ENCODE measurements at regions of chr7 and their contacts with region 1.

Region 1: DNA sequence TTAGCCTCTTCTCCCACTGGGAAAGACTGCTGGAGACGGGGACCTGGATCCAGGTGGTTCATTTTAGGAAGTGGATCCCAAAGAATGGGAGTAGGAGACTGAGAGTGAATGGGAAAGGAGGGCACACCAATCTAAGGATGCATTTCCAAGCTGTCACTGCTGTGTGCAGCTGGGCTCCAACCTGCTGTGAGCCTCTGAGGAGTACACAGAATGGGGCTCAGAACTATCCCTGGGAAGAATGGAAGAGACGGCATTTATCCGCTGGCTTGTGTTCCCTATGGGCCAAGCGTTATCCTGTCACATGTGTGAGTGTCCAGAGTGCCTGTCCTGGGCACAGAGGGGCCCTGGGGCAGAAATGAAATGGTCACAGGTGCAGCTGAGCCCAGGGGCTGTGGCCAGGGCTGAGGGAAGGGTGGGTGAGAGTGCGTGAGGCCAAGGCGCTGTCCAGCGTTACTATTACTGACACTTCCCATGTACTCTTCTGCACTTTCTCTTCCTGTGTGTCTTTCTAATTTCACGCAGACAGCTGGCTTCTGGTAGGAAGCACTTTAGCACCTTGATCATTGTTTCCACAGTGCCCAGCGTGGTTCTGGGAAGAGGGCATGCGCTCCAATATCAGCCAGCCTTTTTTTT is 35.4 kb upstream of the PODXL start:
- DNase-seq: no peak
- ATAC-seq: no peak
- H3K4me3 Mint-ChIP-seq: no peak overlapping the region
- H3K27ac Mint-ChIP-seq: no peak overlapping the region
- H3K4me1 Mint-ChIP-seq: no peaks in the 10 kb centered on the region
- H3K27me3 Mint-ChIP-seq: peaks cover 3% of the 10 kb centered on the region
- CTCF ChIP-seq: no peak

Region 2: DNA sequence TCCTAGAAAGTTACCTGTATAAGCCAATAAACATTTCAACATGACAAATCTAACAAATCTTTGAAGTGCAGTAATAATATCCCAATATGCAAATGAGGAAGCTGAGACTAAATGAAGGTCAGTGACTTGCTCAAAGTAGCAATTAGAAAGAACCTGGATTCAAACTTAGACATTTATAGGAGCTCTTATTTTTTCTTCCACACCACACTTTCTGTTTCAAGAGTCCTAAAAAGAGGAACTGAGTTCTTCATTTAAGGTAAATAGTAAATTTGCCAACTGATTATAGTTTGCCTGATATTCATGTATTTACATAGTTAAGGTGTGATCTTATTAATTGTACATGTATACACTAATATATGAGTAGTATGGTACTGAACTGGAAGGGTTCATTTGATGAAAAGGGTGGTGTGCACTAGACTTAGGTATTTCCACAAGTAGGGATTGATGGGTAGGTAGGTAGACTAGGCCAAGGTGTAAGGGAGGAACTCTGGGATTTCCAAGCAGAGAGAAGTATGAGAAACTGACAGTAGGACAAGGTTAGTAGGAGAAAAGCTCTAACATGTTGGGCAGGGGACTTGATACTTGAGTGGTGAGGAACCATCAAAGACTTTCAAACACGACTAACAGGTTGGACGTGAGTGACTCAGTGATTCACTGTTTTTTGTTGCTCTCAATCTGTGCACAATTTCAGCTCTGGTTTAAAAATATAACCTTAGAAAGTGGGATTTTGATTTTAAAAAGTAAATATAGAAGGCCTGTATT is 1477.2 kb before region 1 on chr7:
- CTCF ChIA-PET with region 1: no interaction called
- POLR2A ChIA-PET with region 1: no interaction called
- intact Hi-C with region 1: no loop called
- DNase-seq: no peak
- ATAC-seq: peak; percentile 14
- H3K4me3 Mint-ChIP-seq: peak overlapping the region; percentile 40
- H3K27ac Mint-ChIP-seq: peak overlapping the region; percentile 3
- H3K4me1 Mint-ChIP-seq: peaks cover 35% of the 10 kb centered on the region
- H3K27me3 Mint-ChIP-seq: no peaks in the 10 kb centered on the region
- CTCF ChIP-seq: no peak

Region 3: GRCh38 chr7:131544449-131545301 is 47.1 kb before region 1 on chr7:
- CTCF ChIA-PET with region 1: no interaction called
- POLR2A ChIA-PET with region 1: interaction called, 12 read pairs
- intact Hi-C with region 1: no loop called
- DNase-seq: no peak
- ATAC-seq: no peak
- H3K4me3 Mint-ChIP-seq: no peak overlapping the region
- H3K27ac Mint-ChIP-seq: no peak overlapping the region
- H3K4me1 Mint-ChIP-seq: no peaks in the 10 kb centered on the region
- H3K27me3 Mint-ChIP-seq: no peaks in the 10 kb centered on the region
- CTCF ChIP-seq: no peak

Region 4: DNA sequence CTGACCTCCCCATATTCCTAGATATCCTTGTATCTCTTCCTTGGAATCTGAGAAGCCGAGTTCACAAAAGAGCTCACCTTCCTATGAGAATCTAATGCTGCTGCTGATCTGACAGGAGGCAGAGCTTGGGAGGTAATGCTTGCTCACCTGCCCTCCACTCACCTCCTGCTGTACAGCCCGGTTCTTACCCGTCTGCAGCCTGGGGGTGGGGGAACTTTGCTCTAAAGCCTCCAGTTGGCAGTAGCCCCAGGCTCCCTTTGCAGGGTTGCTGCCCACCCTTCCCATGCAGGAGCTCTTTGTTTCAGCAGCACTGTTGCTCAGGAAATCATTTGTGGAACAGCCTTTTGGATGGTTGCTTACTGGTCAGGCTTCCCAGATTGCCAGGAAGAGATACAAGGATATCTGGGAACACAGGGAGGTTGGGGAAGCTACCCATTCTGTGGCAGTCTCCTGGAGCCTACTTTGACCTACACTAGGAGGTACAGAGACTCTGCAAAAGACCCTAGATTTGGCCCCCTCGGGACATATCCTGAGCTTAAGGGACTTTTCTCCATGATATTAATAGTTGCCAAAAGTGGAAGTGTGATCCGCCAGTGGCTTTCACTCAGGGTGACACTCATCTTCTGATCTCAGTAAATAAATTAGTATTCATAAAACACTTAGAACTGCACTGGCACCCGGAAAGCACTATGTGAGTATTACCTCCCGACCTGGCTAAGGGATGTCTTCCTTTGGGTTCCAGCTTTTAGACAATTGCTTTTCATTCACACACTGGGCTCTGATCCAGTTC is 328.3 kb after region 1 on chr7:
- CTCF ChIA-PET with region 1: no interaction called
- POLR2A ChIA-PET with region 1: no interaction called
- intact Hi-C with region 1: no loop called
- DNase-seq: no peak
- ATAC-seq: no peak
- H3K4me3 Mint-ChIP-seq: no peak overlapping the region
- H3K27ac Mint-ChIP-seq: no peak overlapping the region
- H3K4me1 Mint-ChIP-seq: no peaks in the 10 kb centered on the region
- H3K27me3 Mint-ChIP-seq: no peaks in the 10 kb centered on the region
- CTCF ChIP-seq: no peak